H1 (cell line): ENCODE measurements at regions of chr17 and their contacts with region 1.

Region 1: GRCh38 chr17:58631523-58632323 is 60.1 kb downstream of the TEX14 start:
- DNase-seq: peak; percentile 89 to 95
- H3K4me3 ChIP-seq: peak overlapping the region; percentile 41 to 65 (median 48); a peak in 7 of 8 replicates
- H3K27ac ChIP-seq: peak overlapping the region; percentile 96
- H3K4me1 ChIP-seq: peaks cover 0 to 3% (median 2%) of the 10 kb centered on the region in 4 experiments; a peak in 6 of 7 replicates
- H3K27me3 ChIP-seq: no peaks in the 10 kb centered on the region
- CTCF ChIP-seq: no peak
- EP300 ChIP-seq: 0 out of 3 replicates have a peak, but pooled peaks of 1 of the 2 experiments have one; percentile 64
- POLR2A ChIP-seq: peak; percentile 99 to 100
- RAD21 ChIP-seq: 0 out of 4 replicates have a peak, but pooled peaks of 1 of the 2 experiments have one; percentile 11

Region 2: DNA sequence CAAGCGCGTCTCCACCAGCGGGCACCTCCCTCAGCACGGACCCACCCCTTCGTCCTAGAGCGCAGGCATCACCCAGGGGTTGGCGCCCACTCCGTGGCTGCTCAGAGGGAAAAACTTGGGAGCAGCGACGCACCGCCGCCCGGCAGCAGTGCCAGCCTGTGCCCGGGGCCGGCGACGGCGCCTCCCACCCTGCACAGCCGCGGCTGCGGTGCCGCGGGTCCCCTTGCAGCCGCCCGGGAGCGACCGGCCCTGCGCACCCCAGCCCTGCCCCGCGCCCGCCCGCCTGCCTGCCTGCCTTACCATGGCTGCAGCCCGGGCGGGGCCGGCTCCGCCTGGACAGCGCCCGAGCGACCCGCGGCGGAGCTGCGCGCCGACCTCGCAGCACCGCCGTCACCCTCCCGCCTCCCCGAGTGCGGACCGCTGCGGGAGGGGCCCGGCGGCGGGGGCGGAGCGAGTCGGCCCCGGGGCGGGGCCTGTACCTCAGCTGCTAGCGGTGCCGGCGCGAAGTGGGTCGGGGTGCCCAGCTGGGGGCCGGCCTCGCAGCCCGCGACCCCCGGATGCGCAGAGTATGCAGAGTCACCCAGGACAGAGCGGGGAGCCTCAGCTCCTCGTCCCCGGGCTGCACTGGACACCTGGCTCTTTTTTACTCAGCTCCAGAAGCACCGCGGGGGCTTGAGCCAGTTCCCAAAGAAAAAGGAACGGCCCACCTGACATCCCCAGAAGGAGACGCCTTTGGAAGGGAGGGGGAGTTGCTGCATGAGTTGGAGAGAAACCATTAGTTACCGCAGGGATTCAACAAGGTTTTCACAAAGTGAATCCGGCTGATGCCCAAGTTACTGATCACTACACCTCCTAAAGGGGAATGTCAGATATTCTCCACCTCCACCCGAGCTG is 99.8 kb before region 1 on chr17:
- CTCF ChIA-PET with region 1: no interaction called
- POLR2A ChIA-PET with region 1: interaction called, 28 read pairs
- DNase-seq: peak in 1 of 2 experiments; percentile 87
- H3K4me3 ChIP-seq: peak overlapping the region; percentile 67 to 90 (median 72)
- H3K27ac ChIP-seq: no peak overlapping the region
- H3K4me1 ChIP-seq: peaks cover 7 to 15% (median 9%) of the 10 kb centered on the region in 4 experiments
- H3K27me3 ChIP-seq: peaks cover 0 to 6% (median 4%) of the 10 kb centered on the region in 4 experiments; a peak in 5 of 7 replicates
- CTCF ChIP-seq: no peak
- EP300 ChIP-seq: no peak
- POLR2A ChIP-seq: no peak
- RAD21 ChIP-seq: no peak

Region 3: DNA sequence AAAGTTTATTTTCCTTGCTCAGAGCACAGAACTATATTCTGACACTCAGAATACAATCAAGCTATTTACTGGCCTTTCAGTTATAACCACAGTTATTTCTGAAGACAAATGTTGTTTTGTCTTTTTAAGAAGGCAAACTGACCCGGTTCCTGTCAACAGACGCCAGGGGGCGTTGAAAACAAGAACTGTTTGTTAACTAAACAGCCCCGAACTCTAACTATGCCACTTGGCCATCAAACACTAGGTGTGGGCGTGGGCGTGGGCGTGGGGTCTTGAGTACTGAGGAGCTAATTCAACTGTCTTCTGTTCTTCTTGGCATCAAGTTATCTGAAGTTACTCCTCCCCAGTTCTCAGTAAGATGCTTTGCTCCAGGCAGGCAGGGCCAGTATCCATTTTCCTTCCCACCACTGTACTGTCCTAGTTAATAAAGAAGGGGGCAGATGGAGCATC is 54.1 kb before region 1 on chr17:
- CTCF ChIA-PET with region 1: interaction called, 7 read pairs
- POLR2A ChIA-PET with region 1: interaction called, 11 read pairs
- DNase-seq: peak in 1 of 2 experiments; percentile 67
- H3K4me3 ChIP-seq: no peak overlapping the region
- H3K27ac ChIP-seq: no peak overlapping the region
- H3K4me1 ChIP-seq: no peaks in the 10 kb centered on the region
- H3K27me3 ChIP-seq: no peaks in the 10 kb centered on the region
- CTCF ChIP-seq: peak in 2 of 3 experiments; percentile 63 to 69; a peak in 3 of 4 replicates
- EP300 ChIP-seq: no peak
- POLR2A ChIP-seq: no peak
- RAD21 ChIP-seq: peak; percentile 46 to 55; a peak in 3 of 4 replicates

Region 4: DNA sequence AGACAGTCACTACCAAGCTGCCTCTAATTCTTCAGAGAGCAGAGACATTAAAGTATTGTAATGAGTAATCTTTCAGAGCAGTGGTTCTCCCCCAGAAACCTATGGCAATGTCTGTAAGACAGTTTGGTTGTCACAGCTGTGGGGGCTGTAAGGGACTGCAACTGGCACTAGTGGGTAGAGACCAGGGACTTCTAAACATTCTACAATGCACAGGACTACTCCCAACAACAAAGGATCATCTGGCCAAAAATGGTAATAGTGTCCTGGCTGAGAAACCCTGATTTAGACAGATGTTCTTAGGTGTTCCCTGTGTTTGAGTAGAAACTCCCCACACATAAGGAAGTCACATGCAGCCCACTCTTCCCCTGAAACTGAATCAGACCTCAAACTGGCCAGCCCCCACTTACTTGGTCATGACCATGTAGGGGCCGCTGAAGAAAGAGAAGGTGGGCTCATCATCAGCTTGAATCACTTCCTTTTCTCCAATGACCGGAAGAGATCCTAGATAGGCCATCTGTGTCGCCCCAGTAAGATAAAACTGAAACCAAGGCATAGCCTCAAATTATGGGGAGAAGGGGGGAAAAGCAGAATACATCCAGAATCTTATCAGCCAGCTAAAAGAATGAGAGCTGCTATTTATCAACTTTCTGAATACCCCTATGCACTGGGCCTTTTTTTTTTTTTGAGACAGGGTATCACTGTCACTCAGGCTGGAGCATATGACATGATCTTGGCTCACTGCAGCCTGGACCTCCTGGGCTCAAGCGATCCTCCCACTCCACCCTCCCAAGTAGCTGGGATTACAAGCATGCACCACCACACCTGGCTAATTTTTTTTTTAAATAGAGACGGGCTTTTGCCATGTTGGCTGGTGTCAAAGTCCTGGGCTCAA is 15.7 kb before region 1 on chr17:
- CTCF ChIA-PET with region 1: no interaction called
- POLR2A ChIA-PET with region 1: interaction called, 73 read pairs
- DNase-seq: no peak
- H3K4me3 ChIP-seq: no peak overlapping the region
- H3K27ac ChIP-seq: no peak overlapping the region
- H3K4me1 ChIP-seq: peaks cover 0 to 2% (median 0%) of the 10 kb centered on the region in 4 experiments; a peak in 1 of 7 replicates
- H3K27me3 ChIP-seq: no peaks in the 10 kb centered on the region
- CTCF ChIP-seq: no peak
- EP300 ChIP-seq: no peak
- POLR2A ChIP-seq: no peak
- RAD21 ChIP-seq: no peak

Region 5: GRCh38 chr17:58648236-58648806 is 16.6 kb after region 1 on chr17:
- CTCF ChIA-PET with region 1: interaction called, 4 read pairs
- POLR2A ChIA-PET with region 1: interaction called, 95 read pairs
- DNase-seq: no peak
- H3K4me3 ChIP-seq: no peak overlapping the region
- H3K27ac ChIP-seq: no peak overlapping the region
- H3K4me1 ChIP-seq: peaks cover 0 to 1% (median 0%) of the 10 kb centered on the region in 4 experiments; a peak in 1 of 7 replicates
- H3K27me3 ChIP-seq: no peaks in the 10 kb centered on the region
- CTCF ChIP-seq: no peak
- EP300 ChIP-seq: no peak
- POLR2A ChIP-seq: no peak
- RAD21 ChIP-seq: no peak

Region 6: DNA sequence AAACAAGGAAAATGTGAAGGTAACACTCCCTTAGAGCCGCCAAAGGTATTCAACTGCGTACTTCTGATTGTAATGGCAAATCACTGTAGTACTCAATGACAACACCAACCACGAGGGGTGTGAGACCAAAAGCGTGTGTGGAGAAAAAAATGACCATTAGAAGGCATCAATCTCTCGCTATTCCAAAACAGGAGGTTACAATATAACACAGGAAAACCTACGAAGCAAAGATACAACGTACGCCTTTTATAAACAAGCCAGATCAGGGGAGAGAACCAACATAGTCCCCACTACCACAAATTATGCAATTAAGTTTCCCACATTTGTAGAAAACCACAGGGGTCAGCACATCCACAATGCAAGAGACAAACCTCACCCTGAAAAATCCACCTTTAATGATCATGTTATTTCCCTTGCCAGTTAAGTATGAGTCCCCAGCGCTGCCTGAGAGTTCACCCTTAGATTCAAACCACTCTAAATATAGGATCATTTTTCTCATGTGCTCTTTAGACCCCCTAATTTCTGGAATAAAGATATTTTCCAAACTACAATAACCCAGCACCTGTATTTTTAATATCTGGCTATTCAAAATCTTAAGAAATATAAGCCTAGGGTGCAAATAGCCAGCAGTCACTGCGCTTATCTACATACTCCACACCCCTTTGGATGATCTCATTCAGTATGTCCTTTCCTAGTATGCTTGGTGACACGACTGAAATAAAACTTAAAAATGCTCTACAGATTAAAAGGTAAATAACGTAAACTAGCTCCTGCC is 47.7 kb after region 1 on chr17:
- CTCF ChIA-PET with region 1: no interaction called
- POLR2A ChIA-PET with region 1: interaction called, 26 read pairs
- DNase-seq: no peak
- H3K4me3 ChIP-seq: no peak overlapping the region
- H3K27ac ChIP-seq: no peak overlapping the region
- H3K4me1 ChIP-seq: no peaks in the 10 kb centered on the region
- H3K27me3 ChIP-seq: no peaks in the 10 kb centered on the region
- CTCF ChIP-seq: no peak
- EP300 ChIP-seq: no peak
- POLR2A ChIP-seq: peak; percentile 96 to 100
- RAD21 ChIP-seq: no peak

Region 7: GRCh38 chr17:58822473-58823270 is 190.9 kb after region 1 on chr17:
- CTCF ChIA-PET with region 1: no interaction called
- POLR2A ChIA-PET with region 1: no interaction called
- DNase-seq: no peak
- H3K4me3 ChIP-seq: no peak overlapping the region
- H3K27ac ChIP-seq: no peak overlapping the region
- H3K4me1 ChIP-seq: no peaks in the 10 kb centered on the region
- H3K27me3 ChIP-seq: no peaks in the 10 kb centered on the region
- CTCF ChIP-seq: no peak
- EP300 ChIP-seq: no peak
- POLR2A ChIP-seq: no peak
- RAD21 ChIP-seq: no peak